ENCODE measurements at regions of chr20 and their contacts with region 1.

Region 1: DNA sequence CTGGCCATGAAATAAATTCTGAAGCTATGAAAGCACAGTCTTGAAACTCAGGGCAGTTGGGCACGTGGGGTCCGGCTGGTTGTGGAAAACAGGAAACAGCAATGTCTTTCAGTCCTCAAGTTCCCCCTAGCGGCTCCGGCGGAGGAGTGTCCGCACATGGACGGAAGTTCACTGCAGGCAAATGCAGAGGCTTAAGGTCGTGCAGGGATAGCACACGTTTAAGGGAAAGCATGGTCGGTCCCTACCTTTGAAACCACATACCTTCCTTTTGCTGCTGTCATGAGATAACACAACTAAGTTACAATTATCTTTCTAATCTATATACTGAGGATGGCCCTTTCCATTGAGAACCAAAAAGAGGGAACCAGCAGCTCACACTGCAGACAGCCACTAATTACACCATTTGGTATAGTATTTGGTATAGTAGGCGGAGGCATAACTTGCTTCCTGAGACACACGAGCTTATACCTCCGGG is 52.6 kb upstream of the NFATC2 start:
- DNase-seq: peak; percentile 85 to 90 (median 88)
- ATAC-seq: peak; percentile 97
- H3K4me3 ChIP-seq: no peak overlapping the region
- H3K27ac ChIP-seq: no peak overlapping the region
- H3K4me1 ChIP-seq: no peaks in the 10 kb centered on the region
- H3K27me3 ChIP-seq: no peaks in the 10 kb centered on the region
- CTCF ChIP-seq: peak; percentile 69 to 95 (median 87)
- POLR2A ChIP-seq: no peak

Region 2: DNA sequence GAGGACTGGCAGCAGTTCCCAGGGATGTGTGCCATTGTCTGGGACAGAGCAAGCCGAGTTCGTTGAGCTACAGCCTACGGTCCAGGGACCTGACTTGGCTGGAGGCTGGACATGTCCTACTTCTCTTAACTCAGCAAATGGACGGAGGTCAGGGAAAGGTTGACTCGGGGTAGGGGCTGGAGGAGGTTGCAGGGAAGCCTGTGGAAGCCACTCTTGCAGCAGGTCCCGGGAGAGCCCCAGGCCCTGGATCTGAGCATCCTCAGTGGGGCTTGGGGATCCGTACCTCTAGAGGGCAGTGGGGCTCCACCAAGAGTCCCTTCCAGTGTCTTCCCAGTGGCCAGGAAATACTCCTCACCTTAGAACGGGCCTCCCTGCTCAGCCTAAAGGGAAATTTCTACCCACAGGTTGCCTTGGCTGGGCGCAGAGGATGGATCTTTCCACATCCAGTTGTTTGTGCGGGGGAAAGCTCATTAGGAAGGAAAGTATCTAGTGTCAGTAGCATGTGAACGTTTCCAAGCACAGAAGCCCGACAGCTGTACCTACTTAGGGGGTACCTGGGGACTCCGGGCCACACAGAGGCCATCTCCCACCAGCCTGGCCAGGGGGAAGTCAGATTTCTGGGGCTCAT is 222.8 kb before region 1 on chr20:
- intact Hi-C with region 1: loop called (anchors 5 kb)
- DNase-seq: peak; percentile 78 to 84 (median 80)
- ATAC-seq: peak; percentile 87
- H3K4me3 ChIP-seq: no peak overlapping the region
- H3K27ac ChIP-seq: no peak overlapping the region
- H3K4me1 ChIP-seq: peaks cover 17% of the 10 kb centered on the region
- H3K27me3 ChIP-seq: no peaks in the 10 kb centered on the region
- CTCF ChIP-seq: peak; percentile 73 to 94 (median 89)
- POLR2A ChIP-seq: no peak

Region 3: GRCh38 chr20:51487565-51488268 is 107.4 kb before region 1 on chr20:
- intact Hi-C with region 1: no loop called
- DNase-seq: no peak
- ATAC-seq: no peak
- H3K4me3 ChIP-seq: no peak overlapping the region
- H3K27ac ChIP-seq: no peak overlapping the region
- H3K4me1 ChIP-seq: peaks cover 5% of the 10 kb centered on the region
- H3K27me3 ChIP-seq: no peaks in the 10 kb centered on the region
- CTCF ChIP-seq: no peak
- POLR2A ChIP-seq: no peak